CD4-positive, alpha-beta memory T cell (primary cell): ENCODE measurements at regions of chr19 and their contacts with region 1.

Region 1: GRCh38 chr19:7488736-7489353 is at the start of gene PEX11G:
- DNase-seq: peak; percentile 85 to 90 (median 88)
- H3K4me3 ChIP-seq: peak within 1 kb of the TSS; percentile 52 to 96
- H3K4me3 Mint-ChIP-seq: peak within 1 kb of the TSS; percentile 84 to 94 (median 90)
- H3K27ac ChIP-seq: peak within 1 kb of the TSS; percentile 76
- H3K27ac Mint-ChIP-seq: peak within 1 kb of the TSS; percentile 83 to 97 (median 92)
- H3K4me1 ChIP-seq: peaks cover 12% of the 10 kb centered on the region
- H3K4me1 Mint-ChIP-seq: peaks cover 3 to 22% (median 13%) of the 10 kb centered on the region in 4 donors
- H3K27me3 ChIP-seq: no peaks in the 10 kb centered on the region
- H3K27me3 Mint-ChIP-seq: no peaks in the 10 kb centered on the region
- total RNA-seq, gene PEX11G: 0.64 to 0.73 TPM

Region 2: GRCh38 chr19:7522072-7522922 is 33.5 kb after region 1 on chr19 and contains the start of gene MCOLN1:
- CTCF ChIA-PET with region 1: no interaction called
- POLR2A ChIA-PET with region 1: interaction called, 6 read pairs
- intact Hi-C with region 1: loop called (anchors 1 kb)
- DNase-seq: peak; percentile 98 to 99 (median 98)
- H3K4me3 ChIP-seq: peak within 1 kb of the TSS; percentile 65 to 69
- H3K4me3 Mint-ChIP-seq: peak within 1 kb of the TSS; percentile 82 to 93 (median 87)
- H3K27ac ChIP-seq: peak within 1 kb of the TSS; percentile 42
- H3K27ac Mint-ChIP-seq: peak within 1 kb of the TSS; percentile 61 to 93 (median 88)
- H3K4me1 ChIP-seq: peaks cover 18% of the 10 kb centered on the region
- H3K4me1 Mint-ChIP-seq: peaks cover 7 to 19% (median 12%) of the 10 kb centered on the region in 4 donors
- H3K27me3 ChIP-seq: no peaks in the 10 kb centered on the region
- H3K27me3 Mint-ChIP-seq: peaks cover 2% of the 10 kb centered on the region in 2 donors
- total RNA-seq, gene MCOLN1: 14.1 to 14.9 TPM

Region 3: DNA sequence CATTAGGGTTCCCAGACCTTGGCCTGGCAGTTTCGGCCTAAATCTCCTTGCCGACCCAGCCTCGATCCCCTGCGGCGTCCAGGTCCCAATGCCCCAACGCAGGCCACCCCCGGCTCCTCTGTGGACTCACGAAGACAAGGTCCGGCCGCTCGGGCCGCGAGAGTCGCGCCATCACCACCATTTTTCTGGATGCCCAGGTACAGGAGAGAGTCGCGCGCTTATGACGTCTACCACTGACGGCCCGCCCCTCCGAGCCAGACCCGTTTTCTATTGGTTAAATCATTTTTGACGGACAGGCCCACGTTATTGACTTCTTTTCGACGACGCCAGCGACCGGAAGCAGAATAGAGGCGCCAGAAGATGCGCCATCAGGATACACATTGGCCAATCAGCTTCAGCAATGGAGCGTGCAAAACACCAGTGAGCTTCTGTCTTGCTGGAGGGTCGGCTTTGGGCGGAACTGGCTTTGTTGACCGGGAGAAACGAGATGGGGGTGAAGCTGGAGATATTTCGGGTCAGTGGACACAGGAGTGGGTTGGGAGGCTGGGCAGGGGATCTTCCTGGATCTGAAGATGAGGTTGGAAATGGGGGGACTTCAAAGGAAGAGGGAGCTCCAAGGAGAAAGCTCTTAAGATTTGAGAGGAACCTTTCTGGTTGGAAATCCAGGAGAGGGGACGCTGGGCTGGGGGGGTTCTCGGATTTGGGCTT is 140.7 kb after region 1 on chr19 and contains the starts of genes PET100 and XAB2:
- CTCF ChIA-PET with region 1: no interaction called
- POLR2A ChIA-PET with region 1: no interaction called
- intact Hi-C with region 1: no loop called
- DNase-seq: peak; percentile 93 to 98 (median 96)
- H3K4me3 ChIP-seq: peak within 1 kb of the TSS; percentile 81 to 96
- H3K4me3 Mint-ChIP-seq: peak within 1 kb of the TSS; percentile 95 to 99 (median 96)
- H3K27ac ChIP-seq: peak within 1 kb of the TSS; percentile 94
- H3K27ac Mint-ChIP-seq: peak within 1 kb of the TSS; percentile 92 to 100 (median 99)
- H3K4me1 ChIP-seq: peaks cover 31% of the 10 kb centered on the region
- H3K4me1 Mint-ChIP-seq: peaks cover 16 to 47% (median 34%) of the 10 kb centered on the region in 4 donors
- H3K27me3 ChIP-seq: no peaks in the 10 kb centered on the region
- H3K27me3 Mint-ChIP-seq: no peaks in the 10 kb centered on the region
- total RNA-seq, gene PET100: 120 to 144 TPM
- total RNA-seq, gene XAB2: 75.6 to 77.2 TPM